Heart left ventricle (tissue), 16 donors: ENCODE measurements at regions of chr21 and their contacts with region 1.

Region 1: DNA sequence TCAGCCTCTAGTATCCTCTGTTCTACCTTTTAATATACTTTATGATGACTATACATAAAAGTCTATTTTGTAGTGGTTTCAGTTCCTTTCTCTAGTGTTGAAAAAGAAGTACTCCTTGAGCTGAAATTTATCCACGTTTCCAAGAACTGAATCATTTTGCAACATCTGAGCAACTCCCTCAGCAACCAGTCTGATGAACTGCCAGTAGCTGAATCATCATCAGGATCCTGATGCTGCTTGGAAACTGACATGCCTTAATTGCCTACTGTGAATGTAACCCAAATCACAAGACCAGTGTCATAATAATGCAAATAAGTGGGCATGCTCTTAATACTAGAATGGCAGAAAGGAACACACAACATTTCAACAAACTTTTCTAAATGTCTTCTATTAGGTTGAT is 103.3 kb downstream of the CYYR1 start:
- DNase-seq: peak in 1 of 5 donors; percentile 27
- ATAC-seq: peak in 2 of 4 donors; percentile 59 to 67
- H3K4me3 ChIP-seq: no peak overlapping the region
- H3K27ac ChIP-seq: peak overlapping the region in 1 of 12 donors; percentile 11
- H3K4me1 ChIP-seq: no peaks in the 10 kb centered on the region
- H3K27me3 ChIP-seq: no peaks in the 10 kb centered on the region
- CTCF ChIP-seq: no peak
- POLR2A ChIP-seq: no peak

Region 2: DNA sequence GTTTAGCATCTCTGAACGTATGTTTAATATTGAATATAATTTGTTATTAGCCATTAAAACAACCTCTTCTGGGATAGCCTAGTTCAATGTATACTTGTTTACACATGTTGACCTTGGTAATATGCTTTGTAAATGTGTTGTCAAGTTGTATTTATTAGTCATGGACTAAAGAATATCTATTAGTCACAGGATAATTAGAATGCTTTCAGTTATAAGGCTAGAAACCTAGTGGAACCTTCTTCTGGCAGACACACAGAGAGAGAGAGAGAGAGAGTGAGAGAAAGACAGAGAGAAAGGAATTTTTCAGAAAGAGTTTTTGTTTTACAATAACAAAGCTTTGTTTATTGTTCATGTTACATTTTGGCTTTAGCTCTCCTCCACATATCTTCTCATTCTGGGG is 118.1 kb before region 1 on chr21:
- intact Hi-C with region 1: no loop called
- DNase-seq: no peak
- ATAC-seq: no peak
- H3K4me3 ChIP-seq: no peak overlapping the region
- H3K27ac ChIP-seq: no peak overlapping the region
- H3K4me1 ChIP-seq: no peaks in the 10 kb centered on the region
- H3K27me3 ChIP-seq: no peaks in the 10 kb centered on the region
- CTCF ChIP-seq: no peak
- POLR2A ChIP-seq: no peak

Region 3: GRCh38 chr21:26405735-26406361 is 63.9 kb before region 1 on chr21:
- intact Hi-C with region 1: loop called in 1 of 10 experiments (anchors 10 kb)
- DNase-seq: no peak
- ATAC-seq: no peak
- H3K4me3 ChIP-seq: no peak overlapping the region
- H3K27ac ChIP-seq: no peak overlapping the region
- H3K4me1 ChIP-seq: peaks cover 0 to 11% (median 0%) of the 10 kb centered on the region in 12 donors
- H3K27me3 ChIP-seq: no peaks in the 10 kb centered on the region
- CTCF ChIP-seq: no peak
- POLR2A ChIP-seq: no peak

Region 4: GRCh38 chr21:26437326-26438009 is 32.3 kb before region 1 on chr21:
- intact Hi-C with region 1: no loop called
- DNase-seq: no peak
- ATAC-seq: no peak
- H3K4me3 ChIP-seq: no peak overlapping the region
- H3K27ac ChIP-seq: no peak overlapping the region
- H3K4me1 ChIP-seq: no peaks in the 10 kb centered on the region
- H3K27me3 ChIP-seq: no peaks in the 10 kb centered on the region
- CTCF ChIP-seq: no peak
- POLR2A ChIP-seq: no peak

Region 5: GRCh38 chr21:26522704-26523103 is 52.9 kb after region 1 on chr21:
- intact Hi-C with region 1: no loop called
- DNase-seq: no peak
- ATAC-seq: peak in 1 of 4 donors; percentile 58
- H3K4me3 ChIP-seq: no peak overlapping the region
- H3K27ac ChIP-seq: peak overlapping the region in 6 of 12 donors; percentile 4 to 63 (median 28)
- H3K4me1 ChIP-seq: peaks cover 0 to 6% (median 0%) of the 10 kb centered on the region in 12 donors
- H3K27me3 ChIP-seq: no peaks in the 10 kb centered on the region
- CTCF ChIP-seq: no peak
- POLR2A ChIP-seq: no peak